Gastrocnemius medialis (tissue), 4 donors: ENCODE measurements at regions of chr17 and their contacts with region 1.

Region 1: GRCh38 chr17:39754161-39754951 is 16.6 kb downstream of the GRB7 start:
- DNase-seq: peak; percentile 67 to 85
- ATAC-seq: peak; percentile 92 to 95
- H3K4me3 ChIP-seq: peak overlapping the region; percentile 62 to 85 (median 76)
- H3K27ac ChIP-seq: peak overlapping the region; percentile 76 to 86 (median 83)
- H3K4me1 ChIP-seq: peaks cover 0 to 5% of the 10 kb centered on the region in 2 donors
- H3K27me3 ChIP-seq: no peaks in the 10 kb centered on the region
- CTCF ChIP-seq: peak; percentile 85 to 100 (median 98)
- POLR2A ChIP-seq: peak; percentile 51 to 67

Region 2: GRCh38 chr17:39547713-39548478 is 206.5 kb before region 1 on chr17:
- in situ Hi-C with region 1: loop called in 1 of 4 experiments (anchors 10 kb)
- intact Hi-C with region 1: loop called (anchors 10 kb)
- DNase-seq: peak; percentile 9 to 46
- ATAC-seq: peak; percentile 59
- H3K4me3 ChIP-seq: no peak overlapping the region
- H3K27ac ChIP-seq: no peak overlapping the region
- H3K4me1 ChIP-seq: peaks cover 0 to 9% of the 10 kb centered on the region in 2 donors
- H3K27me3 ChIP-seq: no peaks in the 10 kb centered on the region
- CTCF ChIP-seq: peak; percentile 67 to 93 (median 85)
- POLR2A ChIP-seq: no peak

Region 3: GRCh38 chr17:39621523-39622379 is 132.6 kb before region 1 on chr17:
- in situ Hi-C with region 1: loop called (anchors 5 to 10 kb)
- intact Hi-C with region 1: loop called (anchors 1 kb)
- DNase-seq: peak; percentile 69 to 79
- ATAC-seq: peak; percentile 88 to 89
- H3K4me3 ChIP-seq: no peak overlapping the region
- H3K27ac ChIP-seq: no peak overlapping the region
- H3K4me1 ChIP-seq: peaks cover 5 to 8% of the 10 kb centered on the region in 2 donors
- H3K27me3 ChIP-seq: peaks cover 14 to 32% (median 21%) of the 10 kb centered on the region in 3 donors
- CTCF ChIP-seq: peak; percentile 97 to 99 (median 99)
- POLR2A ChIP-seq: no peak

Region 4: GRCh38 chr17:39668199-39668966 is 86.0 kb before region 1 on chr17 and contains the start of gene PNMT:
- in situ Hi-C with region 1: no loop called
- intact Hi-C with region 1: loop called (anchors 5 kb)
- DNase-seq: peak in 1 of 2 donors; percentile 75
- ATAC-seq: no peak
- H3K4me3 ChIP-seq: peak within 1 kb of the TSS; percentile 52 to 62 (median 59)
- H3K27ac ChIP-seq: peak within 1 kb of the TSS; percentile 96 to 99 (median 98)
- H3K4me1 ChIP-seq: peaks cover 47 to 64% of the 10 kb centered on the region in 2 donors
- H3K27me3 ChIP-seq: no peaks in the 10 kb centered on the region
- CTCF ChIP-seq: peak; percentile 65 to 80 (median 77)
- POLR2A ChIP-seq: peak in 1 of 2 donors; percentile 32
- total RNA-seq, gene PNMT: 2.0 to 11.8 (median 7.1) TPM

Region 5: GRCh38 chr17:39927101-39927928 is 173.0 kb after region 1 on chr17 and contains the starts of genes LRRC3C and ORMDL3:
- in situ Hi-C with region 1: no loop called
- intact Hi-C with region 1: loop called (anchors 5 kb)
- DNase-seq: peak; percentile 89 to 91
- ATAC-seq: peak; percentile 77 to 82
- H3K4me3 ChIP-seq: peak within 1 kb of the TSS; percentile 96 to 99 (median 98)
- H3K27ac ChIP-seq: peak within 1 kb of the TSS; percentile 90 to 99 (median 96)
- H3K4me1 ChIP-seq: peaks cover 35 to 46% of the 10 kb centered on the region in 2 donors
- H3K27me3 ChIP-seq: no peaks in the 10 kb centered on the region
- CTCF ChIP-seq: peak in 1 of 5 experiments; percentile 11
- POLR2A ChIP-seq: peak; percentile 67 to 84
- total RNA-seq, gene LRRC3C: not detected
- total RNA-seq, gene ORMDL3: 17.3 to 36.2 (median 29.6) TPM